CD4-positive, alpha-beta memory T cell (primary cell): ENCODE measurements at regions of chr4 and their contacts with region 1.

Region 1: DNA sequence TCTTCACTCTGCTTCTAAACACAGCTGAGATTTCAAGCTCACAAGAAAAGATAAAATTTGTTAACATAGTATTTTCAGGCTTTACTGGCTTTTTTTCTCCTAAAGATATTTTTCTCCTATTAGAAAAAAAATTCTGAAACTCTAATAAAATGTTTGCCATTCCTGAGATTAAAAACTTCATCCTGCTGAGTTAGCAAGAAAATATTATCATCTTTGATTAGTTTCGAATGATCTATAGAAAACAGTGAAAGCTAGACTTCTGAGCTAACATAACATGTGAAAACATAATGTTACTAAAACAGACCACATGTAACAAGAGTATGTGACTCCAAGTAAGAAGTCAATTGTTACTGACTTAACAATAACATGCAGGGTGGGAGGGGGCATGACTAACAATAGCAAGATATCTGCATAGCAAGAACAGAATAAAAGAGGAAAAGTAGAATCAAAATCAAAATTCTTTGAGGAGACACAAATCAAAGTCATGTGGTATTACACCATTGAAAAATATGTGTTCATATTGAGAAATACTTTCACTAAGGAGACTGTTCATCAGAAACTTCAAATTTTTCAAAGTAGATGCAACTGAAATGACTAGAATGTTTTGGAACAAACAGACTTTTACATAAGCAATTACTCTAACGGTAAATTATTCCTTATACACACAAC is 14.5 kb downstream of the TBCK start:
- DNase-seq: no peak
- H3K4me3 ChIP-seq: no peak overlapping the region
- H3K4me3 Mint-ChIP-seq: no peak overlapping the region
- H3K27ac ChIP-seq: no peak overlapping the region
- H3K27ac Mint-ChIP-seq: no peak overlapping the region
- H3K4me1 ChIP-seq: no peaks in the 10 kb centered on the region
- H3K4me1 Mint-ChIP-seq: peaks cover 0 to 22% (median 14%) of the 10 kb centered on the region in 4 donors
- H3K27me3 ChIP-seq: no peaks in the 10 kb centered on the region
- H3K27me3 Mint-ChIP-seq: no peaks in the 10 kb centered on the region

Region 2: GRCh38 chr4:106338671-106339070 is 37.1 kb after region 1 on chr4:
- CTCF ChIA-PET with region 1: no interaction called
- POLR2A ChIA-PET with region 1: no interaction called
- intact Hi-C with region 1: loop called (anchors 1 kb)
- DNase-seq: no peak
- H3K4me3 ChIP-seq: no peak overlapping the region
- H3K4me3 Mint-ChIP-seq: no peak overlapping the region
- H3K27ac ChIP-seq: no peak overlapping the region
- H3K27ac Mint-ChIP-seq: no peak overlapping the region
- H3K4me1 ChIP-seq: peaks cover 18% of the 10 kb centered on the region
- H3K4me1 Mint-ChIP-seq: peaks cover 32 to 51% (median 44%) of the 10 kb centered on the region in 4 donors
- H3K27me3 ChIP-seq: no peaks in the 10 kb centered on the region
- H3K27me3 Mint-ChIP-seq: no peaks in the 10 kb centered on the region